Esophagus squamous epithelium (tissue), 5 donors: ENCODE measurements at regions of chr9 and their contacts with region 1.

Region 1: DNA sequence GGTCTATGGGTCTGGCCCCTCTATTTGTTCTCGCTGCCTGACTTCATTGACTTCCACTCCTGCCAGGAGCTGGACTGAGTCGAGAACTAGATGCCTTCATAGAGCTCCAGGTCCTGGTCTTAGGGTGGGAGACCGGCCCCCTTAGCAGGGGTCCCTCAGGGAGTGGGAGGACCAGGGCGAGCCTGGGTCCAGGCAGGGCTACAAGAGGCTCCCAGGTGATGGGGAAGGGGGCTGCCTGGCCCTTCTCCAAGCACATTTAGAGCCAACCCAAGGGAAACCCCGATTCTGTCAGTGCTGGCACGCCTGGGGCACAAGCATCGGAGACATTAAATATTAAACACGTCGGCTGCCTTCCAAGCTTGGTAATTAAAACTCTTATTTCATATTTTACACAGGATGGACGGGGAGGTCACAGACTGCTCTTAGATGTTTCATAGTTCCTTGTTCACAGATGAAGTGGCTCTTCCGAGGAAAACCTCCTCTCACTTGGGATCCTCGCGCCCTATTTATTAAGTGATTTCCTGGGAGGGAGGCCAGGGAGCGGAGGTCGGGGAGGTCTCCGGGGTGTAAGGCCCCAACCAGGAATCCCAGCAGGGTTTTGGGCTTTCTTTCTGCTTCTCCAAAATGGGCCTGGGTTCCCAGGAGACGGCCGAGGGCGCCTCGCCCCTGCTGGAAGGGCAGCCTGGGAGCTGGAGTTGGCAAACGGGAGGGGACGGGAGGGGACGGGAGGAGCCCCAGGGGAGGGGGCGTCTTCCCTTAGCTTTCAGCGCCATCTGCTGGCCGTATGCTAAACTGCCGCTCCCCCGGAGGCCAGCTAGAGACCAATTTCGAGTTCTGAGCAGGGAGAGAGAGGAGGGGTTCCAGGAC is 23.4 kb upstream of the ZBTB43 start:
- DNase-seq: no peak
- H3K4me3 ChIP-seq: peak overlapping the region in 2 of 4 donors; percentile 16 to 43
- H3K27ac ChIP-seq: no peak overlapping the region
- H3K4me1 ChIP-seq: peaks cover 0 to 17% (median 6%) of the 10 kb centered on the region in 3 donors
- H3K27me3 ChIP-seq: peaks cover 0 to 94% (median 0%) of the 10 kb centered on the region in 4 donors
- CTCF ChIP-seq: peak; percentile 92 to 95 (median 94)
- POLR2A ChIP-seq: no peak

Region 2: DNA sequence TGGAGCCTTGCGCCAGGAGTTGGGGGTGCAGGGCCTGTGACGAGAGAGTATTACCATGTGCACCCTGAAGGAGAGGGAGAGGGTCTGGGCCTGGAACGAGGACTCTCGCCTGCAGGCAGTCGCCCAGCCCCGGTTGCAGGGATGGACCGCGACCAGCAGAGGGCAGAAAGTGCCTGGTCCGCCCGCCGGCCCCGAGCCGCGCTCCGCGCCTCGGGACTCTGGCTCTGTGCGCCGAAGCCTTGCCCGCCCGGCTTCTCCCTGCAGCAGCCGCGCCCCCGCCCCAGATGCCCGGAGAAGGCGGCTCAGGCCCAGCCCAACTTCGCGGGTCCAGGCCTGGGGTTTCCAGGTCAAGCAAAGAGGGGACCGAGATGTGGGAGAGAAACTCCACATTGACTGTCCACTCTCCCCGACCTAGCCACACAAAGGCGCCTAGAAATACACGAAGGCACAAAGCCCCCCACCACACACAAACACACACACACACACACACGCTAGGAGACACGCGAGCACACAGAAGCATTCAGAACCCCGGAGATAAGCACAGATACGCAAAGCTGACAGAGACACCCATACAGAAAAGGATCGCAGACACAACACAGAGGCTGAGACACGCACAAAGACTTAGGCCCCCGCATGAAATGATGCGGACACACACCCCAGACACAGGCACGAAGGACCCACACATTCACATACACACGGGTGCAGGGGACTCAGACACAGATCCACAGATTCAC is 169.7 kb before region 1 on chr9:
- intact Hi-C with region 1: loop called (anchors 5 kb)
- DNase-seq: no peak
- H3K4me3 ChIP-seq: peak overlapping the region in 2 of 4 donors; percentile 36 to 61
- H3K27ac ChIP-seq: no peak overlapping the region
- H3K4me1 ChIP-seq: peaks cover 30 to 53% (median 40%) of the 10 kb centered on the region in 3 donors
- H3K27me3 ChIP-seq: peaks cover 32 to 99% (median 38%) of the 10 kb centered on the region in 4 donors
- CTCF ChIP-seq: peak; percentile 74 to 85 (median 84)
- POLR2A ChIP-seq: no peak

Region 3: GRCh38 chr9:126682928-126683697 is 98.3 kb before region 1 on chr9:
- intact Hi-C with region 1: no loop called
- DNase-seq: no peak
- H3K4me3 ChIP-seq: peak overlapping the region in 2 of 4 donors; percentile 31 to 54
- H3K27ac ChIP-seq: no peak overlapping the region
- H3K4me1 ChIP-seq: peaks cover 0 to 12% (median 7%) of the 10 kb centered on the region in 3 donors
- H3K27me3 ChIP-seq: peaks cover 3 to 99% (median 18%) of the 10 kb centered on the region in 4 donors
- CTCF ChIP-seq: no peak
- POLR2A ChIP-seq: no peak

Region 4: DNA sequence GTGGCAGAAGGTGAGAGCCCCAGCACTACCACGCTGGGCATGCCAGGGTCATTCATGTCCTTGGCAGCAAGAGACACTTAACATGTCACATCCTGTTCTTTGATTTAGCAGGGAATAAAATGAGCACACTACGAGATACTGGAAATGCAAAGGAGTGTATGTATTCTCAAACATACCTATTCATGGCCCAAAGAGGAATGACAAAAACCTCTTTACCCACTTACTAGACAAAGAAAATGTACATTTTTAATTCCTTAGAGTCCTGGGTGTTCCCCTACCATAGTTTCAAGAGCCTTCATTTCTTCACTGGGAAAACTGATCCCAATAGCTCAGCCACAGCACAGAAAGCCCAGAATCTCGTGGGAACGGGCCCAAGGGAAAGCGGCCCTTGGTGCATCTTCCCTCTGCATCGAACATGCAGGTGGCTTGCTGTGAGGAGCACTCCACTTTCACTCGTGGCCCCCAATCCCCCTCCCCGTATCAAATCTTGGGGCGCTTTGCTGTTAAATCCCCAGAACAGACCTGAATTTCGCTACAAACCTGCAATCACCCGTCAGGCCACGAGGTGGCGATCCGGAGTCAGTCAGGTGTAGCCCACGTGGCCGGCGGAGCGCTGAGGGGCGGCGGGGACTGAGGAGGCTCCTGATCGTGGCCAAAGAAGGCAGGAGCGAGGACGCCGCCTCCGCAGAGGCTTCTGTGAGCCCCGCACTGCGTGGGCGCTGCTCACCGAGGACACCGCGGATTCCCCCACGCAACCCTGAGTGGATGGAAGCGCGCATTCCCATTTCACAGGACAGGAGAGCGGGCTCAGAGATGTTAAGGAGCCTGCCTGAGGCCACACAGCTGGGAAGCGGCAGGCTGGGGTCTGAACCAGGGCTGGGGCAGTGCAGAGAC is 76.3 kb before region 1 on chr9:
- intact Hi-C with region 1: loop called (anchors 2 kb)
- DNase-seq: no peak
- H3K4me3 ChIP-seq: peak overlapping the region in 3 of 4 donors; percentile 11 to 52 (median 22)
- H3K27ac ChIP-seq: no peak overlapping the region
- H3K4me1 ChIP-seq: peaks cover 6 to 27% (median 22%) of the 10 kb centered on the region in 3 donors
- H3K27me3 ChIP-seq: peaks cover 0 to 79% (median 0%) of the 10 kb centered on the region in 4 donors
- CTCF ChIP-seq: peak; percentile 88 to 93 (median 91)
- POLR2A ChIP-seq: no peak

Region 5: GRCh38 chr9:127065592-127065991 is 284.2 kb after region 1 on chr9:
- intact Hi-C with region 1: no loop called
- DNase-seq: no peak
- H3K4me3 ChIP-seq: no peak overlapping the region
- H3K27ac ChIP-seq: peak overlapping the region in 1 of 4 donors; percentile 27
- H3K4me1 ChIP-seq: peaks cover 0 to 35% (median 6%) of the 10 kb centered on the region in 3 donors
- H3K27me3 ChIP-seq: no peaks in the 10 kb centered on the region
- CTCF ChIP-seq: no peak
- POLR2A ChIP-seq: no peak